ENCODE measurements at regions of chr10 and their contacts with region 1.

Region 1: DNA sequence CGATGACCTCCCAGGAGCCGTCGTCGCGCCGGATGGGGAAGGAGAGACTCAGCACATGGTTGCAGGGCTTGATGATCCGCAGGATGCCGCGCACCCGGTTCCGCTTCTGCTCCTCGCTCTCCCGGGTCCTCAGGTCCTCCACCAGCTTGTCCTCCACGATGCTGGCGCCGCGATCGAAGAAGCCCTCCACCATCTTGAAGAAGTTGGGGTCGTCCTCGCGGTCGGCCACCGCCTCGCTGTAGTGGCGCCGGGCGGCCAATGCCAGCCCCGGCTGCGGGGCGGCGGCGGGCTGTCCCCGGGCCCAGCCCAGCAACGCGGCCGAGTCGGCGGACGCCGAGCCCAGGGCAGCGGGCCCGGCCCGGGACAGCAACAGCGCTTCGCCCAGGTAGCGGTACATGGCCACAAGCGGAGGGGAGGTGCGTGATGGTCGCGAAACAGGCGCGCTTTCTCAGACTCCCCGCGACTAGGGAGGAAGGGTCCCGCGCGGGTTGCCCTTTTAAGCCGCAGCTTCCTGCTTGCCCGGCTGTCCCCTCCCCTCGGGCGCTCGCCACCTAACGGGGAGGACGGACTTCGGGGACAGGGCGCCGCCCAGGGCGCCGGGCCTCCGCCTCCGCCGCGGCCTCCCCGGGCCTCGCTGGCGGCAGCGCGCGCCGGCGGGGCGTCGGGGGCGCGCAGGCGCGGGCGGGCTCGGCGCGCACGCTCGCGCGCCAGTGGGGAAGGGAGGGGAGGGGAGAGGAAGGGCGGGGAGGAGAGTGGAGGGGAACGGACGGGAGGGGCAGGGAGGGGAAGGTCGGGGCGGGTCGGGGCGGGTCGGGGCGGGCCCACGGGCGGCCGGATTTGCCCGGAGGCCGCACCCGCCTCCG is at the starts of genes GLUD1 and SHLD2:
- DNase-seq: peak; percentile 94
- H3K4me3 Mint-ChIP-seq: peak within 1 kb of the TSS; percentile 98
- H3K27ac Mint-ChIP-seq: peak within 1 kb of the TSS; percentile 97
- H3K4me1 Mint-ChIP-seq: peaks cover 44% of the 10 kb centered on the region
- H3K27me3 Mint-ChIP-seq: no peaks in the 10 kb centered on the region
- total RNA-seq, gene GLUD1: 111 to 121 TPM
- total RNA-seq, gene SHLD2: 31.0 to 31.4 TPM

Region 2: DNA sequence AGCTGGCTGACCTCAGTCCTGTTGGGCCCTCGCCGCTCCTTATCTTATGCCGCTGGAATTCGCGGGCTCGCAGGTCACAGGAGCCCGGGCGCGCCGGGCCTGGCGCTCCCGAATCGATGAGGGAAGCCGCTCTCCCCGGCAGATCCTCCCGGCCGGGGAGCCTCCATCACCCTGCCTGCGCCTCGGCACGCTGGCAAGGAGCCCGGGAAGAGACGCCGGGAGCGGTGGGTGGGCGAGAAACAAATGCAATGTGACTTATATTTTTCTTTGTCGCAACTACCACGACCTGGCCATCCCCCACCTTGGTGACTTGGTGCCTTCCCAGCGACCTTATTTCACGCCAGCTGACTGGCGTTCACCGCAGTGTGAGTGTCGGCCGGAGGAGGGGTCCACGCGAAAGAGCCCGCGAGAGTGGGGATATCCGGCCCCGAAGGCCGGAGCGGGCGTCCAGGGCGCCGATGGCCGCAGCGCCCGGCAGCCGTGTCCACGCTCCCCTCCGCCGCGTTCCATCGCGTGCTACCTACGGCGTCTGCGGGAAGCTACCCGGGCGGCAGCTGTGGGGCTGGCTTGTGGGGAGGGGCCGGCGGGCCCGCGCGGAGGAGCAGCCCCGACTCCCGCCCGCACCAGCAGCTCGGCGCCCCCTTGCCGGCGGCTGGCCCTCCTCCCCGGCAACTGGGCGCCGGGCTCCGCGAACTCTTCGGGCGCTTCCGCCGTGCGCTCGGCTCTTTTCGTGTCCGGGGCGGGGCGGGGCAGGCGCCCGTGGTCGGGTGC is 338.7 kb before region 1 on chr10:
- CTCF ChIA-PET with region 1: no interaction called
- POLR2A ChIA-PET with region 1: no interaction called
- DNase-seq: peak; percentile 89
- H3K4me3 Mint-ChIP-seq: peak overlapping the region; percentile 79
- H3K27ac Mint-ChIP-seq: peak overlapping the region; percentile 59
- H3K4me1 Mint-ChIP-seq: peaks cover 53% of the 10 kb centered on the region
- H3K27me3 Mint-ChIP-seq: peaks cover 13% of the 10 kb centered on the region

Region 3: DNA sequence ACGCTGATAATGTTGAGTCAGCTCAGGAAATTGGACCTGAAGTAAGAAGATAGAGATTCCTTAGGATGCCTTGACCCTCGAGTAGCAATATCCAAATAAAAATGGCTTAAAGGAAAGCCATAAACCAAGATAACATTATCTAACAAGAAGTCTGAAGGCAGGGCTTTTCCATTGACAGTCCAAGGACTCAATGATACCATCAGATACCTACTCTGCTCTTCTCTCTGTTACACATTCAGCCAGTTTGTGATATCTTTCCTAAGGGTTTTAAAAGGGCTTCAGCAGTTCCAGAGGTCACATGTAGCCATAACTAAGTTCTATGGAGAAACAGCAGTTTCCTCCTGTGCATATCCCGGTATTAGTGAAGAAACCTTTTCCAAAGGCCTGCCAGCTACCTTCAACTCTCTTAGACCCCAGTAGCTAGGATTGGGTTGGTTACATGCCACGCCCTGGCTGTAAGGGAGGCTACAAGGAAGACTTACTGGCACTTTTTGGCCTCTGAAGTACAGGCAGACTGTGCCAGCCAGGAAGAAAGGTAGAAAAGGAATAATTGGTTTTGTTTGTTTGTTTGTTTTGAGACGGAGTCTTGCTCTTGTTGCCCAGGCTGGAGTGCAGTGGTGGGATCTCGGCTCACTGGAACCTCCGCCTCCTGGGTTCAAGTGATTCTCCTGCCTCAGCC is 11.0 kb after region 1 on chr10:
- CTCF ChIA-PET with region 1: interaction called, 3 read pairs
- POLR2A ChIA-PET with region 1: interaction called, 10 read pairs
- DNase-seq: no peak
- H3K4me3 Mint-ChIP-seq: no peak overlapping the region
- H3K27ac Mint-ChIP-seq: no peak overlapping the region
- H3K4me1 Mint-ChIP-seq: peaks cover 2% of the 10 kb centered on the region
- H3K27me3 Mint-ChIP-seq: no peaks in the 10 kb centered on the region

Measured in activated CD4-positive, alpha-beta memory T cell treated with anti-CD3 and anti-CD28 coated beads, Interleukin-2, amount 10 ng/mL, durations not matched to agents 7 days and 5 days (primary cell).